ENCODE measurements at regions of chrX and their contacts with region 1.

Region 1: DNA sequence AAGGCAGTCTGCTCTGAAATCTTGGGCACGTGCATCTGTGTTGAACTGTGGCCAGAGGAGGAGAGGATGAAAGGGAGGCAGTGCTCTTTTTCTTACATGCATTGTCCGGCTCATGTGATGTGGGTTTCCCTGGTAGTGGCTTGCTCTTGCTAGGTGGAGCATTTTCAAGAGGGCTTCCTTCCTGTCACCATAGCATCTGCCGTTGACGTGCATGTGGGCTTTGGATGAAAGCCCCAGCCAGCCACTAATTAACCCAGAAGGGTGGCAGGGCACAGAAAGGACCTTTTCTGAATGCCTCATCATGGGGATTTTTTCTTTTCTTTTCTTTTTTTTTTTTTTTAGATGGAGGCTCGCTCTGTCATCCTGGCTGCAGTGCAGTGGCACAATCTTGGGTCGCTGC is 121.3 kb downstream of the GPR143 start:
- DNase-seq: peak; percentile 73
- H3K4me3 ChIP-seq: no peak overlapping the region
- H3K27ac ChIP-seq: peak overlapping the region in 2 of 4 donors; percentile 59 to 62
- H3K4me1 ChIP-seq: peaks cover 0 to 25% (median 5%) of the 10 kb centered on the region in 4 donors
- H3K27me3 ChIP-seq: no peaks in the 10 kb centered on the region
- CTCF ChIP-seq: no peak
- EP300 ChIP-seq: no peak
- POLR2A ChIP-seq: no peak

Region 2: GRCh38 chrX:9530848-9531274 is 113.5 kb before region 1 on chrX:
- intact Hi-C with region 1: loop called (anchors 10 kb)
- DNase-seq: peak; percentile 78
- H3K4me3 ChIP-seq: no peak overlapping the region
- H3K27ac ChIP-seq: peak overlapping the region in 1 of 4 donors; percentile 29
- H3K4me1 ChIP-seq: peaks cover 0 to 47% (median 28%) of the 10 kb centered on the region in 4 donors
- H3K27me3 ChIP-seq: no peaks in the 10 kb centered on the region
- CTCF ChIP-seq: no peak
- EP300 ChIP-seq: no peak
- POLR2A ChIP-seq: no peak

Region 3: DNA sequence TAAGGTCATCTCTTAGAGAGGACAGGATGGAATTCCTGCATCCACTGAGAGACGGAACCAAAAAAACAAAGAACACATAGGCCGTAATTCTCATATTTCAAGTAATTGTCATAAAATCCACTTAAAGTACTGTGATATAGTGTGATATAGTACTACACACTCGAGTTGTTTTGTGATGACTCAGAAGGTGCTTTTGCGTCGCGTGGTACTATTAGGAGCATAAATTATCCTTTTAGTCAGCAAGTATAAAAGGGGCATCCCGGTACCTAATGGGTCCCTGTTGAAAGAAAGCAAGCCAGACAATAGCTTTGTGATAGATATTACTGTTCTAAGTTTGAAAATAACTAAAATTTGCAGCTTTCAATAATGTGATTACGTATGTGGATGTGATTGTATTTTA is 66.0 kb after region 1 on chrX:
- intact Hi-C with region 1: no loop called
- DNase-seq: no peak
- H3K4me3 ChIP-seq: no peak overlapping the region
- H3K27ac ChIP-seq: no peak overlapping the region
- H3K4me1 ChIP-seq: no peaks in the 10 kb centered on the region
- H3K27me3 ChIP-seq: no peaks in the 10 kb centered on the region
- CTCF ChIP-seq: no peak
- EP300 ChIP-seq: no peak
- POLR2A ChIP-seq: no peak